ENCODE measurements at regions of chr11 and their contacts with region 1.

Region 1: GRCh38 chr11:65083834-65084597 is at the starts of genes CDCA5 and ZFPL1:
- DNase-seq: peak; percentile 99
- H3K4me3 ChIP-seq: peak within 1 kb of the TSS; percentile 64 to 93 (median 83)
- H3K27ac ChIP-seq: peak within 1 kb of the TSS; percentile 90 to 97 (median 92)
- H3K4me1 ChIP-seq: peaks cover 17 to 24% (median 21%) of the 10 kb centered on the region in 4 donors
- H3K27me3 ChIP-seq: no peaks in the 10 kb centered on the region
- CTCF ChIP-seq: peak in 1 of 3 experiments; percentile 28
- EP300 ChIP-seq: no peak
- POLR2A ChIP-seq: no peak
- total RNA-seq, gene CDCA5: 0.33 to 1.1 (median 0.38) TPM
- total RNA-seq, gene ZFPL1: 24.1 to 50.7 (median 43.7) TPM

Region 2: GRCh38 chr11:64506731-64507130 is 577.3 kb before region 1 on chr11:
- intact Hi-C with region 1: no loop called
- DNase-seq: no peak
- H3K4me3 ChIP-seq: no peak overlapping the region
- H3K27ac ChIP-seq: no peak overlapping the region
- H3K4me1 ChIP-seq: no peaks in the 10 kb centered on the region
- H3K27me3 ChIP-seq: peaks cover 0 to 77% (median 0%) of the 10 kb centered on the region in 4 donors
- CTCF ChIP-seq: no peak
- EP300 ChIP-seq: no peak
- POLR2A ChIP-seq: no peak

Region 3: GRCh38 chr11:64643256-64643881 is 440.6 kb before region 1 on chr11:
- intact Hi-C with region 1: no loop called
- DNase-seq: no peak
- H3K4me3 ChIP-seq: peak overlapping the region; percentile 33 to 51 (median 44)
- H3K27ac ChIP-seq: no peak overlapping the region
- H3K4me1 ChIP-seq: peaks cover 0 to 21% (median 19%) of the 10 kb centered on the region in 4 donors
- H3K27me3 ChIP-seq: peaks cover 0 to 86% (median 18%) of the 10 kb centered on the region in 4 donors
- CTCF ChIP-seq: no peak
- EP300 ChIP-seq: no peak
- POLR2A ChIP-seq: no peak

Region 4: GRCh38 chr11:64894070-64894796 is 189.8 kb before region 1 on chr11:
- intact Hi-C with region 1: no loop called
- DNase-seq: no peak
- H3K4me3 ChIP-seq: no peak overlapping the region
- H3K27ac ChIP-seq: peak overlapping the region in 1 of 4 donors; percentile 2
- H3K4me1 ChIP-seq: peaks cover 11 to 25% (median 17%) of the 10 kb centered on the region in 4 donors
- H3K27me3 ChIP-seq: no peaks in the 10 kb centered on the region
- CTCF ChIP-seq: peak; percentile 87 to 93 (median 90)
- EP300 ChIP-seq: no peak
- POLR2A ChIP-seq: no peak

Region 5: DNA sequence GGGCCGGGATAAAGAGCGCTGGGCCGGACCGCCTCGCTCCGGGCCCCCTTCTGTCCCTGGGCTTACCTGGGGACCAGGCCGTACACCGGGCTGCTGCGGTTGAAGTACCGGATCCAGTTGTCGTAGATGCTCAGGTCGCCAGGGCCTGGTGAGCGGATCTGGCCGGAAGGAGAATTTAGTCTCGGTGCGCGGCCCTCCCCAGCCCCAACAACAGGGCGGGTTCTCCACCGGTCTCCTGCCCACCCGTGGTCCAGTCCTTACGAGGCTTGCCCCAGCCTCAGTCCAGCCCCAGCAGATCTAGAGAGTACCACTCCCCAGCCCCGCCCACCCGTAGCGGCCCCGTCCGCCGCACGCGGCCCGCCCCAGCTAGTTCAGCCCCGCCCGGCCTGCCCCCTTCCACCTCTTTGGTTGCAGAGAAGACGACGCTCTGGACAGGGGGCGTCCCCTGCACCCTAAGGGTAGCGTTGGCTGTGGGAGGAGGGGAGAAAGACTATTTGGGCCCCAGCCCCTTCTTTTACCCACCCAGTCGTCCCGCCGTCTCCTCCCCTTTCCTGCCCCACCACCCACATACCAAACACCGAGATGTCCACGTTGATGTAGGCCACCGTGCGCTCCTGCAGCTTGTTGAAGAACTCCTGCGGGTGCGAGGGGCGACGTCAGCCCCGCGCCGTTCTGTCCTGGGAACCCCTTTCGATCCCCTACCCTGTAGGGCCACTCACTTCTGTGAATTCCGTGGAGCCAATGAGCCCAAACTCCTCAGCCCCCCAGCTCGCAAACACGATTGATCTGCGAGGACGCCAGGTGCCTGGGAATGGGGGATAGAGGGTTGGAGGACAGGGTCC is 36.2 kb before region 1 on chr11:
- intact Hi-C with region 1: loop called (anchors 5 kb)
- DNase-seq: no peak
- H3K4me3 ChIP-seq: peak overlapping the region; percentile 59 to 68 (median 62)
- H3K27ac ChIP-seq: peak overlapping the region; percentile 53 to 74 (median 64)
- H3K4me1 ChIP-seq: peaks cover 19 to 43% (median 29%) of the 10 kb centered on the region in 4 donors
- H3K27me3 ChIP-seq: peaks cover 0 to 3% (median 0%) of the 10 kb centered on the region in 4 donors
- CTCF ChIP-seq: no peak
- EP300 ChIP-seq: no peak
- POLR2A ChIP-seq: no peak

Region 6: DNA sequence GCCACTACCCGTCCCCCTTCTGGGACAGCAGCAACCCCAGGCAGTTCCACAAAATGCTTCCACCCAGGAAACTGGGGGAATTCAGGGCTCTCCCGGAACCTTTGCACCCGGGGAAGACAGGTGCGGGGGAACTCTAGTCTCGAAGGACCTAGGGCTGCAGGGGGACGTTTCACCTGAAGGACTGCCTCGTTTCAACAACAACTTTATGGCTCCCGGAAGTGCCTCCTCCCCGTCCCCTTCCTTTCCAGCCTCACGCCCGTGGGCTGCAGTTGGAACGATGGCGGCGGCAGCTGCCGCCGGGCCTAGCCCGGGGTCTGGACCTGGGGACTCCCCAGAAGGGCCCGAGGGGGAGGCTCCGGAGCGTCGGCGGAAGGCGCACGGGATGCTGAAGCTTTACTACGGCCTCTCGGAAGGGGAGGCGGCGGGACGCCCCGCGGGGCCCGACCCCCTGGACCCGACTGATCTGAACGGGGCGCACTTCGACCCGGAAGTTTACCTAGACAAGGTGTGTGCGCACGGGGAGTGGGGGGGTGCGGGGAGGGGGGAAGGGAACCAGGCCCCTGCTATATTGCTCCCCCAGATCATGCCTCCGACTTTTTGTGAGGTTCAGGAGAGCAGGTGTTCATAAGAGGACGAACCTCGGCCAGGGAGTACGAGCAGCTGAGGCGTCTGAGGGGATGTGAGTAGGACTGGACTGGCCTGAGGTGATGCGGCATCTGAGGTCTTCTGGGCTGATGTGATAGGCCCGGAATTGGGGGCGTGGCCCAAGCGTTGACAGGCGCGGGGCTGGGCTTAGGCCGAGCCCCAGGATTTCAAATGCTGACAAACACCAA is 12.2 kb after region 1 on chr11 and contains the start of gene VPS51:
- intact Hi-C with region 1: loop called (anchors 1 kb)
- DNase-seq: peak; percentile 97
- H3K4me3 ChIP-seq: peak within 1 kb of the TSS; percentile 75 to 93 (median 88)
- H3K27ac ChIP-seq: peak within 1 kb of the TSS; percentile 85 to 96 (median 90)
- H3K4me1 ChIP-seq: peaks cover 20 to 31% (median 25%) of the 10 kb centered on the region in 4 donors
- H3K27me3 ChIP-seq: no peaks in the 10 kb centered on the region
- CTCF ChIP-seq: peak in 1 of 3 experiments; percentile 45
- EP300 ChIP-seq: no peak
- POLR2A ChIP-seq: peak; percentile 52
- total RNA-seq, gene VPS51: 185 to 414 (median 237) TPM